ENCODE measurements at regions of chr15 and their contacts with region 1.

Region 1: GRCh38 chr15:60916679-60917460 is 312.2 kb downstream of the RORA start:
- DNase-seq: peak; percentile 76
- ATAC-seq: peak; percentile 96
- H3K4me3 ChIP-seq: no peak overlapping the region
- H3K27ac ChIP-seq: no peak overlapping the region
- H3K4me1 ChIP-seq: peaks cover 3% of the 10 kb centered on the region; the same call in 1 of the 2 replicates
- H3K27me3 ChIP-seq: no peaks in the 10 kb centered on the region
- CTCF ChIP-seq: peak; percentile 82 to 87 (median 84)
- EP300 ChIP-seq: no peak
- POLR2A ChIP-seq: no peak
- RAD21 ChIP-seq: peak; percentile 92

Region 2: DNA sequence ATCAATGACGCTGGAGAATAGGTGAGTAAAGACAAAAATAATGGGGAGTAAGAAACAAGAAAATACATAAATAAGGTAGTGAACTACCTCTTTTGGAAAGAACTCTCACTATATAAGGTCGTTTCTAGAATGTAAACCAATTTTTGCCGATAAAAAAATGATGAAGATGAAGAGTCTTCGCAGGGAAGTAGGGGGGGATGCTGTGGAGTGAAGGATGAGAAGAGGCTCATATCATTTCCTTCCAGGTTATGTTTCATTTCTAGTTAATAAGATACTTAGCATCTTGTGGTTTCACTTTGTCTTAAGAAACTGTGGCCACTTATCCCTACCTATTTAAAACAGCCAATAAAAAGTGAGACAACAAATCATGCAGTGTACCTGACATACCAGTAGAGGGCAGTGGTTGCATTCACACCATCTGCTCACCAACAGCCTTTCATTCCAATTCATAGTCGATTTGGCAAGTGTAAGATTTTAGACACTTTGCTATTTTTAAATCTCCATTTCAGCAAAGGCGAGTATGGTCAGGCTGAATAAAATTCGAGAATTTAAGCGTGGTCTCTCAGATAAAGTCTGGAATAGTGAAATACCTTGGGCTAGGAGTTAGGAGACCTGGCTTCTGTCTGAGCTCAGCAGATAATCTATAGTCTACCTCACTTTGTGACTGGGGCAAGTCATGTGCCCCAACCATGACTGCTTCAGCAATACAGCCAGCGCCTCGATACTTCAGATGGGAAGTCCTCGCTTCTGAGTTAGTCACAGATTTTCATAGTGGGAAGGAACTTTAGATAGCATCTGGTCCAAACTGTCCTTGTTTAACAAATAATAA is 409.1 kb before region 1 on chr15:
- CTCF ChIA-PET with region 1: interaction called, 29 read pairs
- POLR2A ChIA-PET with region 1: interaction called, 3 read pairs
- RAD21 ChIA-PET with region 1: interaction called, 11 read pairs
- SMC1A ChIA-PET with region 1: interaction called, 38 read pairs
- in situ Hi-C with region 1: loop called (anchors 5 kb)
- intact Hi-C with region 1: loop called (anchors 2 kb)
- DNase-seq: peak; percentile 83
- ATAC-seq: peak; percentile 92
- H3K4me3 ChIP-seq: no peak overlapping the region
- H3K27ac ChIP-seq: peak overlapping the region; percentile 46; the same call in 1 of the 2 replicates
- H3K4me1 ChIP-seq: peaks cover 18% of the 10 kb centered on the region
- H3K27me3 ChIP-seq: no peaks in the 10 kb centered on the region
- CTCF ChIP-seq: peak; percentile 88 to 97 (median 95)
- EP300 ChIP-seq: no peak
- POLR2A ChIP-seq: no peak
- RAD21 ChIP-seq: peak; percentile 92

Region 3: DNA sequence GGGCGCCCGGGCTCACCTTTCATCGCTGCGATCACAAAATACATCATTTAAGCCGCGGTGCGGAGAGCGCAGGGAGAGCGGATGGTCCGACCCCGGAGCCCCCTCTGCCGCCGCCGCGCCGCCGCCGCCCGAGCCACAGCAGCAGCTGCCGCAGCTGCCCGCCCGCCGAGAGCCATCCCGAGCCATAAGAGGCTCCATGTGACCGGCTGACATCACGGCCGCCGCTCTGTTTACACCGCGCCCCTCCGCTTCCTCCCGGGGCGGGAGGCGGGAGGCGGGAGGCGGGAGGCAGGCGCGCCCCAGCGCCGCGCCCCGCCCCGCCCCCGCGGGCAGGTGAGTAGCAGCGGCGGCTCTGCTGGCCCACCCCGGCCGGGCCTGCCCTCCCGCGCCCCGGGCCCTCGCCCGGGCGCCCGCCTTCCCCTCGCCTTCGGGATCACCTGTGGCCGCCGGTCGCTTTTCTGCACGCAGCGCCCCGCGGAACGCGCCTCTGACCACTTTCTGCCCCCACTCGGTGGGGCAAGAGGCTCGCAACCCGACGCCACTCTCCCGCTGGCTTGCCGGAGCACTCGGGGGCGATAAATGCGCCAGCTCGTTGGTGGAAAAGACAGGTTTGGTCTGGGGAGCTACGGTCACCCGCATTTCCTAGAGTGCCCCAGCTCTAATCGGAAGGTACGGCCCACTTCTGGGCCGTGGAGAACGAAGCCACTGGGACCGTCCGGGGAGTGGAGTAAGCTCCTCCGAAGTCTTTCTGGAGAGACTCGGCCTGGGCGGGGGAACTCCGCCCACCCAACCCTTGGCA is 324.3 kb before region 1 on chr15:
- CTCF ChIA-PET with region 1: interaction called, 141 read pairs
- POLR2A ChIA-PET with region 1: interaction called, 4 read pairs
- RAD21 ChIA-PET with region 1: interaction called, 94 read pairs
- SMC1A ChIA-PET with region 1: interaction called, 131 read pairs
- in situ Hi-C with region 1: no loop called
- intact Hi-C with region 1: no loop called
- DNase-seq: no peak
- ATAC-seq: peak; percentile 74
- H3K4me3 ChIP-seq: peak overlapping the region; percentile 83
- H3K27ac ChIP-seq: no peak overlapping the region
- H3K4me1 ChIP-seq: no peaks in the 10 kb centered on the region
- H3K27me3 ChIP-seq: no peaks in the 10 kb centered on the region; a peak in 1 of 4 replicates
- CTCF ChIP-seq: peak; percentile 20 to 40 (median 35); a peak in 4 of 6 replicates
- EP300 ChIP-seq: no peak
- POLR2A ChIP-seq: peak; percentile 82
- RAD21 ChIP-seq: peak; percentile 19; the same call in 1 of the 2 replicates

Region 4: GRCh38 chr15:60673918-60674558 is 242.8 kb before region 1 on chr15:
- CTCF ChIA-PET with region 1: interaction called, 29 read pairs
- POLR2A ChIA-PET with region 1: no interaction called
- RAD21 ChIA-PET with region 1: interaction called, 29 read pairs
- SMC1A ChIA-PET with region 1: interaction called, 60 read pairs
- in situ Hi-C with region 1: no loop called
- intact Hi-C with region 1: loop called (anchors 1 kb)
- DNase-seq: no peak
- ATAC-seq: no peak
- H3K4me3 ChIP-seq: no peak overlapping the region
- H3K27ac ChIP-seq: no peak overlapping the region
- H3K4me1 ChIP-seq: peaks cover 26% of the 10 kb centered on the region
- H3K27me3 ChIP-seq: no peaks in the 10 kb centered on the region
- CTCF ChIP-seq: no peak
- EP300 ChIP-seq: no peak
- POLR2A ChIP-seq: no peak
- RAD21 ChIP-seq: no peak

Region 5: DNA sequence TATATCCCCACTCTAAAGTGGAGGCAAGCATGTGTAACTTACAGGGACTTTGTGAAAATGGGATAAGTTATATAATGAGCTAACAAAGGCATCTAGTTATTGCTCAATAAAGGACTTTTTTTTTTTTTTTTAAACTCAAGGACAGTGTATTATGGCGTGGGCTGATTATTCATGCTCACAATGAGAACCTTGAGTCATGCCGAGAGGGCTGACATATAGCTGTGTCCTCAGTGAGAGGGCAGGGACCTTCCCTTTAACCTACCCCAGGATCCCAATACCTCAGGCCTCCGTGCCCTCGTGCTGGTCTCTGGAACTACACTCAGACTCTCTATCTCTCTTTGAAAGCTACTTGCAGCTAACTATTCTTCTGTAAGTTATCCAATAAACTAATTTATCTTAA is 118.0 kb before region 1 on chr15:
- CTCF ChIA-PET with region 1: interaction called, 5 read pairs
- POLR2A ChIA-PET with region 1: interaction called, 3 read pairs
- RAD21 ChIA-PET with region 1: interaction called, 11 read pairs
- SMC1A ChIA-PET with region 1: interaction called, 6 read pairs
- in situ Hi-C with region 1: no loop called
- intact Hi-C with region 1: loop called (anchors 5 kb)
- DNase-seq: peak; percentile 19
- ATAC-seq: peak; percentile 76
- H3K4me3 ChIP-seq: no peak overlapping the region
- H3K27ac ChIP-seq: no peak overlapping the region
- H3K4me1 ChIP-seq: peaks cover 19% of the 10 kb centered on the region
- H3K27me3 ChIP-seq: no peaks in the 10 kb centered on the region
- CTCF ChIP-seq: no peak
- EP300 ChIP-seq: no peak
- POLR2A ChIP-seq: no peak
- RAD21 ChIP-seq: 0 out of 2 replicates have a peak, but pooled peaks have one; percentile 20

Region 6: DNA sequence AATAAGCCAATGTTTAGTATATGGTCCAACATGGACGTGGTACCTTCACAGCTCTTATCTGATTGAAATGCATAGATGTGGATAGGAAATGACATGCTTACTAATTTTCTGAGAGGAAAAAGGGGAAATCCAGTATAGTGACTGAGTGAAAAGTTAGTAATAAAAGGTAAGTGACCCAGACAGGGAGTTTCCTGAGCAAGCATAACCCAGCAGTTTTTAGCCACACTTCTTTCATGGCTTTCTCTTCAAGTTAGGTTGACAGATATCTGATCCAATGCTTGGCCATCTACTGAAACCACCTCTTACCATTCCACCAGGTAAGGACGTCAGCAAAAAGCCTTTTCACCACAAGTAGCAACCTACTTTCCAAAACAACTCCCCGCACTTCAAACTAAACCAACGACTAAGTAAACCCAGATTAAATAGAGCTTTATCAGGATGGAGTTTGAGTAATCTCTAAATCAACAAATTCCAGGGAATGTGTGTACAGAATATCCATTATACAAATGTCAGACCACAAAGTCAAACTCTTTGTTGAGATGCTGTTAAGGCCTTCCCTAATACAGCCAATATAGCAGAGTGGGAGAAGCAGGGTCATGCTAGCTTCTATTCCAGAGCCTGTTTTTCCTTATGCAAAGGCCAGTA is 17.4 kb before region 1 on chr15:
- CTCF ChIA-PET with region 1: interaction called, 45 read pairs
- POLR2A ChIA-PET with region 1: interaction called, 6 read pairs
- RAD21 ChIA-PET with region 1: interaction called, 23 read pairs
- SMC1A ChIA-PET with region 1: interaction called, 52 read pairs
- in situ Hi-C with region 1: no loop called
- intact Hi-C with region 1: loop called (anchors 2 kb)
- DNase-seq: peak; percentile 76
- ATAC-seq: peak; percentile 79
- H3K4me3 ChIP-seq: no peak overlapping the region
- H3K27ac ChIP-seq: peak overlapping the region; percentile 60; the same call in 1 of the 2 replicates
- H3K4me1 ChIP-seq: peaks cover 45% of the 10 kb centered on the region
- H3K27me3 ChIP-seq: no peaks in the 10 kb centered on the region
- CTCF ChIP-seq: no peak
- EP300 ChIP-seq: peak; percentile 76 to 87; a peak in 3 of 4 replicates
- POLR2A ChIP-seq: no peak
- RAD21 ChIP-seq: no peak

Region 7: GRCh38 chr15:60932051-60932915 is 15.4 kb after region 1 on chr15:
- CTCF ChIA-PET with region 1: interaction called, 16 read pairs
- POLR2A ChIA-PET with region 1: no interaction called
- RAD21 ChIA-PET with region 1: interaction called, 6 read pairs
- SMC1A ChIA-PET with region 1: interaction called, 15 read pairs
- in situ Hi-C with region 1: no loop called
- intact Hi-C with region 1: no loop called
- DNase-seq: no peak
- ATAC-seq: peak; percentile 66
- H3K4me3 ChIP-seq: no peak overlapping the region
- H3K27ac ChIP-seq: no peak overlapping the region
- H3K4me1 ChIP-seq: no peaks in the 10 kb centered on the region
- H3K27me3 ChIP-seq: peaks cover 0 to 4% of the 10 kb centered on the region in 2 experiments; a peak in 2 of 4 replicates
- CTCF ChIP-seq: peak; percentile 25 to 44 (median 34); a peak in 5 of 6 replicates
- EP300 ChIP-seq: no peak
- POLR2A ChIP-seq: no peak
- RAD21 ChIP-seq: peak; percentile 72